K562 (cell line): ENCODE measurements at regions of chr12 and their contacts with region 1.

Region 1: DNA sequence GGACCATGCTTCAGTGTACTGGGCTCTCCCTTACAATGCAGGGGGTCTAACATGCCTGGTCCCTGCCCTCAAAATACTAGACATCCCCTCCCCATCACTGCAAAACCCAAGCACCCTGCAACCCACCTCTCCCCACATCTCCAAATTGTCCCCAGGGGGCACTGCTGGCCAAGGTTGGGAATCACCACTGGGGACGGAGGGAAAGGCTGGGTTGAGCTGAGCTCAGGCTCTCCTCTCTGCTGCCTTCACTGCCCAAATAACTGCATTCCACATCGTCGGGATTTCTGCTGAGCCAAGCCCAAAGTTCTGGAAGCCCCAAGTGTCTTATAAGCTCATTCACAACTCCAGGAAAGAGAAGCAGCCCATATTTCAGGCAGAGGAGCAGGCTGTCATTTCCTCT is 69.6 kb downstream of the NT5DC3 start:
- DNase-seq: peak; percentile 32 to 51 (median 44)
- ATAC-seq: peak; percentile 94
- H3K4me3 ChIP-seq: no peak overlapping the region
- H3K27ac ChIP-seq: no peak overlapping the region
- H3K4me1 ChIP-seq: peaks cover 0 to 5% of the 10 kb centered on the region in 2 experiments; a peak in 1 of 5 replicates
- H3K27me3 ChIP-seq: no peaks in the 10 kb centered on the region
- CTCF ChIP-seq: peak; percentile 68 to 75 (median 75)
- EP300 ChIP-seq: no peak
- POLR2A ChIP-seq: 0 out of 2 replicates have a peak, but pooled peaks have one; percentile 22
- RAD21 ChIP-seq: peak; percentile 67 to 81

Region 2: DNA sequence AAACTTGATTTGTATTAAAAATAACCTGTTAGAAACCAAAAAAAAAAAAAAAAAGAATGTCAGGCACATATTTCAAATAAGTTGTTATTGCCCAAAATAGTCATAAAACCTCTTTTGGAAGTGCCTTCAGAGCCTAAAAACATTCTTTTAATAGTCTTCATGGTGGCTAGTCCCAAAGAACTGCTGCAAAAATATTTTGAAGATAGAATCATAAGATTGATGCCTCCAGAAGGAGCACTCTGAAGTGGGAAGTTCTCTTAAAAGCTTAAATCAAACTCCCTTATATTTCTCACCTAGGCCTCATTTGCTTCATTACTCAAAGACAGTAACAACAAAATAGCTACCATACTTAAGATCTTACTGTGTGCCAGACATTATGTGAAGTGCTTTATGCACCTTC is 96.7 kb after region 1 on chr12:
- CTCF ChIA-PET with region 1: interaction called, 33 read pairs
- POLR2A ChIA-PET with region 1: interaction called, 4 read pairs
- in situ Hi-C with region 1: no loop called
- intact Hi-C with region 1: loop called (anchors 1 kb)
- DNase-seq: no peak
- ATAC-seq: no peak
- H3K4me3 ChIP-seq: no peak overlapping the region
- H3K27ac ChIP-seq: no peak overlapping the region
- H3K4me1 ChIP-seq: no peaks in the 10 kb centered on the region
- H3K27me3 ChIP-seq: peaks cover 14 to 27% of the 10 kb centered on the region in 2 experiments; a peak in 4 of 5 replicates
- CTCF ChIP-seq: no peak
- EP300 ChIP-seq: no peak
- POLR2A ChIP-seq: no peak
- RAD21 ChIP-seq: no peak